ENCODE measurements at regions of chr13 and their contacts with region 1.

Region 1: GRCh38 chr13:96967248-96967745 is 27.0 kb downstream of the OXGR1 start:
- DNase-seq: peak; percentile 25
- ATAC-seq: peak; percentile 92
- H3K4me3 ChIP-seq: peak overlapping the region in 1 of 3 experiments; percentile 33; a peak in 3 of 6 replicates
- H3K27ac ChIP-seq: no peak overlapping the region
- H3K4me1 ChIP-seq: 0 out of 2 replicates have a peak, but pooled peaks cover 7% of the 10 kb centered on the region
- H3K27me3 ChIP-seq: no peaks in the 10 kb centered on the region; a peak in 2 of 5 replicates
- CTCF ChIP-seq: peak; percentile 52
- EP300 ChIP-seq: no peak
- POLR2A ChIP-seq: no peak
- RAD21 ChIP-seq: no peak

Region 2: GRCh38 chr13:96141027-96141426 is 826.3 kb before region 1 on chr13:
- CTCF ChIA-PET with region 1: interaction called, 3 read pairs
- POLR2A ChIA-PET with region 1: no interaction called
- in situ Hi-C with region 1: loop called (anchors 10 kb)
- intact Hi-C with region 1: loop called (anchors 2 kb)
- DNase-seq: peak; percentile 20
- ATAC-seq: no peak
- H3K4me3 ChIP-seq: no peak overlapping the region
- H3K27ac ChIP-seq: no peak overlapping the region
- H3K4me1 ChIP-seq: no peaks in the 10 kb centered on the region
- H3K27me3 ChIP-seq: no peaks in the 10 kb centered on the region
- CTCF ChIP-seq: peak; percentile 32; the same call in 1 of the 2 replicates
- EP300 ChIP-seq: no peak
- POLR2A ChIP-seq: no peak
- RAD21 ChIP-seq: no peak

Region 3: GRCh38 chr13:97477844-97478243 is 510.5 kb after region 1 on chr13:
- CTCF ChIA-PET with region 1: no interaction called
- POLR2A ChIA-PET with region 1: no interaction called
- in situ Hi-C with region 1: no loop called
- intact Hi-C with region 1: no loop called
- DNase-seq: no peak
- ATAC-seq: no peak
- H3K4me3 ChIP-seq: no peak overlapping the region
- H3K27ac ChIP-seq: no peak overlapping the region
- H3K4me1 ChIP-seq: no peaks in the 10 kb centered on the region
- H3K27me3 ChIP-seq: no peaks in the 10 kb centered on the region; a peak in 1 of 5 replicates
- CTCF ChIP-seq: no peak
- EP300 ChIP-seq: no peak
- POLR2A ChIP-seq: no peak
- RAD21 ChIP-seq: no peak

Measured in HepG2 (cell line).